ENCODE measurements at regions of chr1 and their contacts with region 1.

Region 1: DNA sequence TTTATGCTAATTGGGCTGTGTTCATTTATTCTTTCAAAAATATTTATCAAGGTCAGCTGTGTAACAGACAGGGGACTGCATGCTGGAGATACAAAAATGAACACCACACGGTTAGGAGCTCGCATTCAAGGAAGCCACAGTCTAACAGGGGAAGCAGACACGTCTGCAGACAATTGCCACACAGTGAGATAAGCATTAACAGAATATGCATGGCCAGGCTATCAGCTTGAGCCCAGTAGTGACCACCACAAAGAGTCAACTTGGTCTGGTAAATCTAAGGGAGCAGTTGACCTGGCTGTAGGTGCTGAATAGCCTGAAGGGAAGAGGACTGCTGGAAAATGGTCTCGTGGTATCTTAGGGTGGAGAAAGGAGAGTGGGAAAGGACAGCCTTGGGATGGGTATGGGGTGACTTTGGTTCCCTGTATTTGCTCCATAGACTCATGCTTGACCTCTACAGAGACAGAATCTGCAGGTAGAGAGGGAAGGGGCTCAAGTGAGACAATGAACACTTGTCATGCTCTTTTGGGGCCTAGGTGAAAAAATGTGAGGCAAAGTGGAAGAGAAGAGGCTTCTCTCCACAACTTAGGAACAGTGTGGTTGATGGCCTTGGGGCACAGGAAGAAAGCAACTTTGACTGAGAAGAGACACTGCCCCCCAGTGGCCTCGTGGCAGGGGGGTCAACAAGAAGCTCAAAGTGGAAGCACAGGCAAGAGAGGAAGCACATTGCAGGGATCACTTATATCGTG is 7.6 kb upstream of the NPL start:
- DNase-seq: peak; percentile 79
- ATAC-seq: peak; percentile 79
- H3K4me3 Mint-ChIP-seq: no peak overlapping the region
- H3K27ac Mint-ChIP-seq: no peak overlapping the region
- H3K4me1 Mint-ChIP-seq: peaks cover 18% of the 10 kb centered on the region
- H3K27me3 Mint-ChIP-seq: peaks cover 4% of the 10 kb centered on the region
- CTCF ChIP-seq: peak; percentile 63

Region 2: DNA sequence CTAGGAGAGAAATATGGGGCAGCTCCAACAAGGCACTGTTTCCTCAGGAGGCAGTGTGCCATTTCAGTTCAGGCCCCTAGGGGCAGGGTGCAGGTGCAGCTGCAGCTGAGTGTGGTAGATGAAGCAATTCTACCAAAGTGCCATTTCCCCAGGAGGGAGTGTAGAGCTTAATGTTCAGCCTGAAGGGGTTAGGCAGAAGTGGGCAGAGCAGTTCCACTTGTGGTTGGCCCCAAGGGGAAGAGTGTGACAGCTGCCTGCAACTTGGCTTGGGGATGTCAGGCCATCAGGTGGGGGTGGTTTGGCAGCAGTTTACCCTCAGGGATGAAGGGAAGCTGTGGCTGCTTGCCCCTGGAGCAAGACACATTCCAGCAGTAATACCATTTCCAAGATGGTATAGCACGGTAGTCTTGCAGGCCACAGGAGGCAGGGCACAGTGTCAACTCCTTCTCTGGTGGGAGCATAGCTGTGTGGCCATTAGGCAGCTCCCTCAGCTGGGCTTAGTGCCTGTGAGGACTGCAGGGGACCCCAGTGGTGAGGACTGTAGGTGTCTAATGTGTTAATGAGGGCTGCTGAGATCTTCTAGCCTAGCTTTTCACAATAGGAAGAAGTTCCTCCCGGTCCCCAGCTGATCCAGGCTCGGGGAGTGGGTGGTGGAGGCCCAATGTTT is 297.3 kb before region 1 on chr1:
- CTCF ChIA-PET with region 1: interaction called, 12 read pairs
- POLR2A ChIA-PET with region 1: no interaction called
- DNase-seq: peak; percentile 54
- ATAC-seq: peak; percentile 99
- H3K4me3 Mint-ChIP-seq: no peak overlapping the region
- H3K27ac Mint-ChIP-seq: no peak overlapping the region
- H3K4me1 Mint-ChIP-seq: no peaks in the 10 kb centered on the region
- H3K27me3 Mint-ChIP-seq: no peaks in the 10 kb centered on the region
- CTCF ChIP-seq: peak; percentile 40; the same call in 1 of the 2 replicates

Region 3: DNA sequence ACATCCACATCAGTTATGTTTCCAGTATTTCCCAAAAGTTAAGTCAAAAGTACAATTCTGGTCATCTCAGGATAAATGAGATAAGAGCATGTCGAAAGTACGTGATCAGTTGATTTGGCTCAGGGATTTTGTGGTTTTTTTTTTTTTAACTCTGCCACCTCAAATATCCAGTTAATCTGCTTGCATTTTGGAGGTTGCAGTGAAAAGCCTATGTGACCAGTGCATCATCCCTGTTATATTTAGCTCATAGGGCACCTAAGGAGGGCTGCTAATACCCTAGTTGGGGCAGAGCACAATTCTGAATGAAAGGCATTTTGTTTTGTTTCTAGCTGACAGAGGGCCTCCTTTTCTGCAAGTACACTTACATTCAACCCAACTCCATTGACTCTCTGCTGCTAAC is 146.1 kb before region 1 on chr1:
- CTCF ChIA-PET with region 1: interaction called, 10 read pairs
- POLR2A ChIA-PET with region 1: no interaction called
- DNase-seq: no peak
- ATAC-seq: no peak
- H3K4me3 Mint-ChIP-seq: no peak overlapping the region
- H3K27ac Mint-ChIP-seq: no peak overlapping the region
- H3K4me1 Mint-ChIP-seq: peaks cover 23% of the 10 kb centered on the region
- H3K27me3 Mint-ChIP-seq: no peaks in the 10 kb centered on the region
- CTCF ChIP-seq: no peak

Region 4: GRCh38 chr1:182674346-182675246 is 107.4 kb before region 1 on chr1:
- CTCF ChIA-PET with region 1: interaction called, 32 read pairs
- POLR2A ChIA-PET with region 1: no interaction called
- DNase-seq: no peak
- ATAC-seq: peak; percentile 75
- H3K4me3 Mint-ChIP-seq: no peak overlapping the region
- H3K27ac Mint-ChIP-seq: no peak overlapping the region
- H3K4me1 Mint-ChIP-seq: peaks cover 56% of the 10 kb centered on the region
- H3K27me3 Mint-ChIP-seq: no peaks in the 10 kb centered on the region
- CTCF ChIP-seq: no peak

Region 5: GRCh38 chr1:182735343-182735742 is 46.7 kb before region 1 on chr1:
- CTCF ChIA-PET with region 1: interaction called, 14 read pairs
- POLR2A ChIA-PET with region 1: no interaction called
- DNase-seq: no peak
- ATAC-seq: no peak
- H3K4me3 Mint-ChIP-seq: no peak overlapping the region
- H3K27ac Mint-ChIP-seq: no peak overlapping the region
- H3K4me1 Mint-ChIP-seq: peaks cover 22% of the 10 kb centered on the region
- H3K27me3 Mint-ChIP-seq: no peaks in the 10 kb centered on the region; the same call in 1 of the 2 replicates
- CTCF ChIP-seq: no peak

Region 6: DNA sequence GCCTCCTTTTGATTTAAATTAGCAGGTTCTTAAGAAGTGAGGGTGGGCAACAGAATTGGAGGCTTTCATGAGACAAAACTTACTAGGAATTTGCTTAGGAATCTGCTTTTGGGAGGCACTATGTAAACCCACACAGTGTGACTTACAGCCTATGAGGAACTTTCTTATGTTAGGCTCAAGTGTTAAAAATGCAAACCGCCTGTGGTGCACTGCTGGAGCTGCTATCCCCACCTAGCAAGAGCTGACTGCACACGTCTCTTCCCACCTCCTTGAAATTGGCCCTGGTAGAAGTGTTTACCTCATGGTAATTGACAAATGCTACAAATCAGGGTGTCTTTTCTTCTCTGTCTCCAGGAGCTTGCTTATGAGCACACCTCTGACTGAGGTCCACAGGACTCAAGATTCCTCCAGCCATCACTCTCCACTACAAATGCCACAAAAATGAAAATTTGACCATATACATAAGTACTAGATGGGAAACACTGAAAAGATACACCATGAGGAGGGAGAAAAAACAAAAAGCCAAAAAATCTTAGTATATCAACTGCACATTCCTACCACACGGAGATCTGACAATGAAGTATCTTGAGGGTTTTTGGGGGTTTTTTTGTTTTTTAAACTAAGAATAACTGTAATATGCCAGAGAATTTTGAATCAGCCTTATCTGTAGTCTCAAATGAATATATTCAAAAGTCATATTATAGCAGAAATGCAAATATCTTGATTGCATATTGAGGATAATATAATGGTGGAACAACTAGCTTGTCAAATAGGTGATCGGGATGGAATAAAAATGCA is 10.6 kb before region 1 on chr1:
- CTCF ChIA-PET with region 1: interaction called, 16 read pairs
- POLR2A ChIA-PET with region 1: no interaction called
- DNase-seq: no peak
- ATAC-seq: peak; percentile 85
- H3K4me3 Mint-ChIP-seq: no peak overlapping the region
- H3K27ac Mint-ChIP-seq: no peak overlapping the region
- H3K4me1 Mint-ChIP-seq: peaks cover 21% of the 10 kb centered on the region
- H3K27me3 Mint-ChIP-seq: no peaks in the 10 kb centered on the region
- CTCF ChIP-seq: no peak

Region 7: GRCh38 chr1:182811975-182812725 is 30.1 kb after region 1 on chr1:
- CTCF ChIA-PET with region 1: interaction called, 14 read pairs
- POLR2A ChIA-PET with region 1: no interaction called
- DNase-seq: no peak
- ATAC-seq: peak; percentile 80
- H3K4me3 Mint-ChIP-seq: no peak overlapping the region
- H3K27ac Mint-ChIP-seq: no peak overlapping the region
- H3K4me1 Mint-ChIP-seq: peaks cover 2% of the 10 kb centered on the region; the same call in 1 of the 2 replicates
- H3K27me3 Mint-ChIP-seq: no peaks in the 10 kb centered on the region
- CTCF ChIP-seq: no peak

Region 8: DNA sequence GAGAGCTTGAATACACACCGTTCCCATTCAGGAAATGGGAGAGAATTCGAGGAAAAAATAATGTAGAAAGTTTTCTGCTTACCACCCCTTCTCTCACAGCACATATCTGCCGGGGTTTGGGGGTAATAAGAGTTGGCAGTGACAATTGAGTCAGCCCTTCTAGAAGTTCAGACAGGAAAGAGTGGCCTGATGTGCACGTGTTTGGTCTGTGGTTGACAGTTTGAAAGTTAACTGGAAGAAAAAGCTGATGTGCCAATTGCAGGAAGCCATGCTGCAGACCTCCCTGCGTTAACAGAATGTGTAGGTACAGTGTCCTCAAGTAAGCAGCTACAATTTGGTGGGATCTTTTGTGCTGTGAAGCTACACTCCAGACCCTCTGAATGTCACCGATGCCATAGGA is 108.0 kb after region 1 on chr1:
- CTCF ChIA-PET with region 1: no interaction called
- POLR2A ChIA-PET with region 1: no interaction called
- DNase-seq: no peak
- ATAC-seq: peak; percentile 9
- H3K4me3 Mint-ChIP-seq: no peak overlapping the region
- H3K27ac Mint-ChIP-seq: peak overlapping the region; percentile 68; the same call in 1 of the 2 replicates
- H3K4me1 Mint-ChIP-seq: peaks cover 12% of the 10 kb centered on the region
- H3K27me3 Mint-ChIP-seq: no peaks in the 10 kb centered on the region
- CTCF ChIP-seq: no peak

Region 9: DNA sequence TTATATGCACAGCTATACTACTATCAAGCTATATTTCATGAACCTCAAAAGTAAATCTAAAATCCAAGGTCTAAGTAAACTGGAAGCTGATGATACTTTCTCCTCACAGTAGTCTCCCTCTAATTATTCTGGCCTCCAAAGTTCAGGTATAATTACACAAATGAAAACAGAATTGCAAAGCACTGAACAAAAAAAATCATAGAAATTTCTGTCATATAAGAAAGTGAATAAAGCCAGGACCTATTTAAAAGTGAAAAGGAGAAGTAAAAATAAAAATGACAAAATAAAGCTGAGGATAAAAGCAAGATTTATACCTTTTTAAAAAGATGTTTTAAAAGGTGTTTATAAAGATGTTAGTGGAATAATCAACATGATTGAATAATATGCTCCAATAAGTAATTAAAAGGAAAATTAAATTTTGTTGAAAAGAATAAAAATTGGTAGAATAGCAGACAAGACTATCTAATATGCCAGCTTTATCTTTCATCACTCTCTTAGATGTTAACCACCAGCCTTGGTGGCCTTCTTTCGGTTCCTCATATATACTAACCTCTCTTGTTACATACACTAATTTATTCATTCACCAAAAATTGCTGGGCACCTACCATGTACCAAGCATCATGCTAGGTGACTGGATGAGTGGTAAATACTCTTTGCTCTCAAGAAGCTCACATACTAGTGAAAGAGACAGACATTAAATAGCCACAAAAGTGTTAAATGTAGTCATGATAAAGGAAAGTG is 145.8 kb after region 1 on chr1:
- CTCF ChIA-PET with region 1: no interaction called
- POLR2A ChIA-PET with region 1: no interaction called
- DNase-seq: no peak
- ATAC-seq: no peak
- H3K4me3 Mint-ChIP-seq: no peak overlapping the region
- H3K27ac Mint-ChIP-seq: no peak overlapping the region
- H3K4me1 Mint-ChIP-seq: no peaks in the 10 kb centered on the region; the same call in 1 of the 2 replicates
- H3K27me3 Mint-ChIP-seq: no peaks in the 10 kb centered on the region; the same call in 1 of the 2 replicates
- CTCF ChIP-seq: no peak

Region 10: DNA sequence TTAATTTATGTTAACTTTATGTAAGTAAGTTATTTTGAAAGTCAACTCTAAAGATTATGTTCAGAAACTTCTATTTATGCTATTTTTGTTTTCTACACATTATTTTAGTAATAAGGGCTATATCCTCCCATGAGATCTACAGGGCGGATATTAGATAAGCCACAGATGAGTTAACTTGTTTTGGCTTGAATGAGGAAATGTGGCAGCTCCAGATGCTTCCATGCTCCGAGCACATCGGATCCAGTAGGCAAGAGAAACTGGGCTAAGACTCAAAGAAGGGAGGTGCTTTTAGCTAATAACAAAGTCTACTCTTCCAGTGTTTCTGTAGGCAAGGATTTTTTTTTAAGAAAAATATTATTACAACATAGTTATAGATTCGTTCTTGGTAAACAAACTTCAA is 221.2 kb after region 1 on chr1:
- CTCF ChIA-PET with region 1: no interaction called
- POLR2A ChIA-PET with region 1: no interaction called
- DNase-seq: no peak
- ATAC-seq: no peak
- H3K4me3 Mint-ChIP-seq: no peak overlapping the region
- H3K27ac Mint-ChIP-seq: no peak overlapping the region
- H3K4me1 Mint-ChIP-seq: peaks cover 2% of the 10 kb centered on the region; the same call in 1 of the 2 replicates
- H3K27me3 Mint-ChIP-seq: no peaks in the 10 kb centered on the region
- CTCF ChIP-seq: no peak